Psoas muscle (tissue), 8 donors: ENCODE measurements at regions of chr2 and their contacts with region 1.

Region 1: GRCh38 chr2:25309402-25309801 is 32.3 kb downstream of the DNMT3A start:
- DNase-seq: peak; percentile 58 to 79
- ATAC-seq: peak in 2 of 4 donors; percentile 30 to 34
- H3K4me3 ChIP-seq: no peak overlapping the region
- H3K27ac ChIP-seq: no peak overlapping the region
- H3K4me1 ChIP-seq: peaks cover 87% of the 10 kb centered on the region
- H3K27me3 ChIP-seq: no peaks in the 10 kb centered on the region
- CTCF ChIP-seq: peak; percentile 35

Region 2: DNA sequence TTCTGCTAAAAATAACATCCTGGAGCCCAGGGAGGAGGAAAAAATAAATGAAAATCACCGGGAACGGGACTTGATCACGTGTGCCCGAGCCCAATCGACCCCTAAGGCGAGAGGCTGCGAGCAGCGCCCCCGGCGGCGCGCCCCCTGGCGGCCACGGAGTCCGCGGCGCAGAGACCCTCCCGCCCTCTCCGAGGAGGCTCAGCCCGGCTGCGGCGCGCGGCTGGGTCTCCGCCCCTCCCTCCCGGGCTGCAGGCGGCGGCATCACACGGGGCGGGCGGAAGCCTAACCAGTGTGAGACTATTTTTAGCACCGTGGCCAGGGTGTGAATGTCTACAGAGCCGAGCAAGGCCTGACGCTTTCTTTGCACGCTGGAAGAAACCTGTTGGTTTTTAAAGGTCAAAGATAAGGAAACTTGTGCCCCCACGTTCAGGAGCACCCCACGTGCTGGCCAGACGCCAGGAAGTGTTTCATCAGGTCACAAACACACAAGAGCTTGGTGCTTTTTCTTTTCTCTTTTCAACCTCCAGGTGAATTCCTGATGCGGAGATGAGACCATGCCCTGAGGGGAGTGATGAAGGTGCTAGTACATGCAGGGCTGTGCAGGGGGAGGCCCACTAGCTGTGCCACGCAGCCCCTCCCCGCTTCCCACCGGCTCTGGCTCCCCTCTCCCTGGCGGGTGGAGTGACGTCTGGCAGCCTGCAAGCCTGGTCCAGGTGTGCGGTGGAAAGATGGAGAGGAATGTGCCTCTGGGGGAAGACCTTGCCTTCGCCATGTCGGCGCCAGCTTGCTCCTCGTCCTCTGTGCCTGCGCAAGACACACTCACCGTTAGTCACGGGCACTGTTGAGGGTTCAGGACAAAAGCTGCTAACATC is 67.6 kb after region 1 on chr2:
- intact Hi-C with region 1: loop called in 1 of 2 experiments (anchors 5 kb)
- DNase-seq: peak; percentile 86 to 94
- ATAC-seq: peak; percentile 88 to 94 (median 92)
- H3K4me3 ChIP-seq: peak overlapping the region; percentile 53
- H3K27ac ChIP-seq: peak overlapping the region; percentile 53
- H3K4me1 ChIP-seq: peaks cover 40% of the 10 kb centered on the region
- H3K27me3 ChIP-seq: no peaks in the 10 kb centered on the region
- CTCF ChIP-seq: peak; percentile 98